T-cell (primary cell): ENCODE measurements at regions of chr10 and their contacts with region 1.

Region 1: DNA sequence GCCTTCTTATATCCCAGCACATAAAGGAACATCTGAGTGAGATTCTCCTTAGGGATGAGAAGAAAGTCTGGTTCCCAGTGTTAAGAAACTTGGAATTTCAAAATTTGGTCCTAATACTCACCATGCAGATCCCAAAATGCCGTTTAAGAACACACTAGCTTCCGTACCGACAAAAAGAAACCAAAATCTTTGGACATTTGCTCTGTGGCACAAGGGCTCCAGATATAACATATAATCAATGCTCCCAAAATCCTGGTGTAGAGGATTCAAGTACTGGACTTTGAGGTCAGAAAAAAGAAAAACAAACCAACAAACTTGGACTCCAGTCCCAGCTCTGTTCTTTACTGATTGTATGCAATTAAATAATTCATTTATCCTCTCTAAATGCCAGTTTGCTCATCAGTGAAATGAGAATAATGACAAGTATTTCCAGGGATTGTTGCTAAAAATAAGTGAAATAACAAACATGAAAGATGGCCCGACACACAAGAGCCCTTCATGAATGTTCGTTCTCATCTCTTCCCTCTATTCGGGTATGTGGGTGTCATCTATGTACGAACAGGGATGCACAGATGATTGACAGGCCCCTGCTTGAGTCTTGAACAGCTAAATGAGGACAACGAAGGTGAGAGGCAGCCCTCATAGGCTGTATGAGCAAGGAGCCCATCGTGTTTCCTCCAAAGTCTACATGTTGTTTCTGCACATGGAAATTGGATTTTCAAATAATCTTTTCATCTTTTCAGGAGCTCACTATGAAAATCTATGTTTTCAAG is 48.6 kb upstream of the NEBL start:
- DNase-seq: no peak
- ATAC-seq: no peak
- H3K4me3 ChIP-seq: no peak overlapping the region
- H3K4me3 Mint-ChIP-seq: no peak overlapping the region
- H3K27ac ChIP-seq: no peak overlapping the region
- H3K27ac Mint-ChIP-seq: no peak overlapping the region
- H3K4me1 ChIP-seq: no peaks in the 10 kb centered on the region
- H3K4me1 Mint-ChIP-seq: no peaks in the 10 kb centered on the region
- H3K27me3 ChIP-seq: no peaks in the 10 kb centered on the region
- H3K27me3 Mint-ChIP-seq: no peaks in the 10 kb centered on the region

Region 2: DNA sequence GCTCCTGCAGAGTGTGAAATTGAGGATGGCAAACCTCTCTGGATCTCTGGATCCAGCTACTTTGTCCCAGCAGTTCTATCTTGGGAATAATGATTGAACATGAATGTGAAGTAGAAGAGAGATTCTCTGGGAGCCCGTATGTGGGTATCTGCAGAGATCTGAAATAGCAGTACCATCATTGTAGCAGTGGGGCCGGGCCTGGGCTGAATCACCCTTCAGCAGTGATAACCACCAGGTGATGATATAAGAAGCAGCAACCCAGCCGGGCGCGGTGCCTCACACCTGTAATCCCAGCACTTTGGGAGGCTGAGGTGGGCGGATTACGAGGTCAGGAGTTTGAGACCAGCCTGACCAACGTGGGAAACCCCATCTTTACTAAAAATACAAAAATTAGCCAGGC is 527.8 kb after region 1 on chr10:
- CTCF ChIA-PET with region 1: no interaction called
- POLR2A ChIA-PET with region 1: interaction called in 1 of 2 experiments, 10 read pairs
- DNase-seq: no peak
- ATAC-seq: no peak
- H3K4me3 ChIP-seq: no peak overlapping the region
- H3K4me3 Mint-ChIP-seq: no peak overlapping the region
- H3K27ac ChIP-seq: no peak overlapping the region
- H3K27ac Mint-ChIP-seq: no peak overlapping the region
- H3K4me1 ChIP-seq: no peaks in the 10 kb centered on the region
- H3K4me1 Mint-ChIP-seq: no peaks in the 10 kb centered on the region
- H3K27me3 ChIP-seq: peaks cover 0 to 8% of the 10 kb centered on the region in 2 experiments
- H3K27me3 Mint-ChIP-seq: no peaks in the 10 kb centered on the region